Heart left ventricle (tissue), 16 donors: ENCODE measurements at regions of chr9 and their contacts with region 1.

Region 1: GRCh38 chr9:12719431-12719830 is 26.2 kb downstream of the TYRP1 start:
- DNase-seq: no peak
- ATAC-seq: peak in 3 of 4 donors; percentile 36 to 69 (median 38)
- H3K4me3 ChIP-seq: no peak overlapping the region
- H3K27ac ChIP-seq: no peak overlapping the region
- H3K4me1 ChIP-seq: peaks cover 0 to 5% (median 0%) of the 10 kb centered on the region in 12 donors
- H3K27me3 ChIP-seq: no peaks in the 10 kb centered on the region
- CTCF ChIP-seq: peak; percentile 28 to 67 (median 54)
- POLR2A ChIP-seq: no peak

Region 2: GRCh38 chr9:12652973-12653372 is 66.5 kb before region 1 on chr9:
- intact Hi-C with region 1: no loop called
- DNase-seq: no peak
- ATAC-seq: no peak
- H3K4me3 ChIP-seq: no peak overlapping the region
- H3K27ac ChIP-seq: no peak overlapping the region
- H3K4me1 ChIP-seq: no peaks in the 10 kb centered on the region
- H3K27me3 ChIP-seq: no peaks in the 10 kb centered on the region
- CTCF ChIP-seq: no peak
- POLR2A ChIP-seq: no peak

Region 3: GRCh38 chr9:12819436-12820185 is 100.2 kb after region 1 on chr9:
- intact Hi-C with region 1: loop called in 1 of 10 experiments (anchors 2 kb)
- DNase-seq: no peak
- ATAC-seq: no peak
- H3K4me3 ChIP-seq: no peak overlapping the region
- H3K27ac ChIP-seq: peak overlapping the region in 1 of 12 donors; percentile 25
- H3K4me1 ChIP-seq: peaks cover 0 to 21% (median 4%) of the 10 kb centered on the region in 12 donors
- H3K27me3 ChIP-seq: no peaks in the 10 kb centered on the region
- CTCF ChIP-seq: peak in 11 of 12 donors; percentile 7 to 50 (median 32)
- POLR2A ChIP-seq: no peak

Region 4: GRCh38 chr9:12884737-12885414 is 165.4 kb after region 1 on chr9:
- intact Hi-C with region 1: loop called (anchors 1 to 5 kb)
- DNase-seq: no peak
- ATAC-seq: peak in 3 of 4 donors; percentile 57 to 68 (median 58)
- H3K4me3 ChIP-seq: no peak overlapping the region
- H3K27ac ChIP-seq: no peak overlapping the region
- H3K4me1 ChIP-seq: peaks cover 0 to 17% (median 2%) of the 10 kb centered on the region in 12 donors
- H3K27me3 ChIP-seq: no peaks in the 10 kb centered on the region
- CTCF ChIP-seq: peak; percentile 17 to 74 (median 57)
- POLR2A ChIP-seq: no peak

Region 5: DNA sequence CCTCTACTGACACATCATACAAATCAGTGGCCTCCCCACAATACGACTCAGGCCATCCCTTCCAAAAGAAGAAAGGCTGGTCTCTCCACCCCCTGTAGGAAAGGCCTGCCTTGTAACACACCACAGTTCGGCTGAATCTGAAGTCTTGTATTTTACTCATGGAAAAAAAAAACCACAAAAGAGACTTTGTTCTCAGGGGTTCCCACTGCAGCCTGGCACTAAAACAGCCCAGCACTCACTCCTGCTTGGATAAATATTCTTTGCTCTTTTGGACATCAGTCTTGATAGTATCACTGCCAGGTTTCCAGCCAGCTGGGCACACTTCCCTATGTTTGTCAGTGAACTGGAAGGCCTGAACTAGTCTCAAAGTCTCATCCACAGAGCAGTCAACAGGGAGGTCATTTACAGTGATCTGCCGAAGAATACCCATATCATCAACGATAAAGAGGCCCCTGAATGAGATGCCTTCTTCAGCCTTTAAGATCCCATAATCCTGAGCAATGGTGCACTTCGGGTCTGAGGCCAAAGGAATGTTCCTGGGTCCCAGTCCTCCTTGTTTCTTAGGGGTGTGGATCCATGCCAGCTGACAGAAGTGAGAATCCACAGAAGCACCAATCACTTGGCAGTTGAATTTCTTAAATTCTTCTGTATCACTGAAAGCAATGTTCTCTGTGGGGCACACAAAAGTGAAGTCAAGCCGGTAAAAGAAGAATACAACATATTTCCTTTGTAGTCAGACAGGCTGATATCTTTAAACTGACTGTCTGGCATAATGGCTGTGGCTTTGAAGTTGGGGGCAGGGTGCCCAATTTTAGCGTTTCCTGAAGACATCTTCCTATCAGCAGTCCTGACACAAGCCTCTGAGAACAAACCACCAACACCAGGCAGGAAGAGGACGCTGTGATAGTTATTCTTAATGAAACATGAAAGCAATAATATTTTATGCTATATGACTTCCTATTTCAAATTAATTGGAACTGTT is 253.5 kb after region 1 on chr9:
- intact Hi-C with region 1: loop called in 1 of 10 experiments (anchors 10 kb)
- DNase-seq: peak in 2 of 5 donors; percentile 28 to 56
- ATAC-seq: peak; percentile 75 to 90 (median 84)
- H3K4me3 ChIP-seq: no peak overlapping the region
- H3K27ac ChIP-seq: peak overlapping the region in 8 of 12 donors; percentile 16 to 67 (median 28)
- H3K4me1 ChIP-seq: peaks cover 0 to 13% (median 7%) of the 10 kb centered on the region in 12 donors
- H3K27me3 ChIP-seq: no peaks in the 10 kb centered on the region
- CTCF ChIP-seq: peak in 1 of 12 donors; percentile 15
- POLR2A ChIP-seq: no peak

Region 6: DNA sequence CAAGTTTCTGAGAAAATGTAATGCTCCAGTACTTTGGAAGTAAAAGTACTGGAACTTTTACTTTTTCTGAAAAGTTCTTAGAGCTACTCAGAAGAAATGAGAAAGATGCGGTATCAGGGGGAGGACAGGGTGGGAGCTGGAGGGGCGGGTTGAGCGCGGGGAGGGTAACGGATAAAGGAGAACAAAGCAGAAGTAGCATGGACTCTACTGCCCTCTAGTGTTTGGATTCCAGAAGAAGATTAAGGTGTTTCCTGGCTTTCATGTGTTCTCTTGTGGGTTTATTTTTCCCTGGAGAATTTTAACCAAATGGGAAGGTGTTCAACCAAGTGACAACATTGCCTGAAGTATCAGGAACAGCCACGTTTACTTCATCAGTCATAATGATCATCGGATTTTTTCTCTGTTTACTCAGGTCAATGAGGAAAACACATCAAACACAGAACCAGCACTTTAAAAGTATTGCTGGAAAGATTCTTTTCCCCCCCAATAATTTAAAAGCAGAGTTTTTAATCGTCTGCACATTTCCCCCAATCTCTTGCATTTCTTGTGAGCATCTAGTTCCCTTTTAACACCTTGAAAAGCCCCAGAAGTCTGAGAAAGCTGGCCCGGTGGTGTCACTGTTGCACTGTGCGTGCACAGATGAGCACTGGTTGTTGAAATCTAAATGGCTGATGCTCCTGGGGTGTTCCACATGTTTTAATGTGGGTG is 369.4 kb after region 1 on chr9:
- intact Hi-C with region 1: loop called (anchors 2 to 5 kb)
- DNase-seq: no peak
- ATAC-seq: peak in 1 of 4 donors; percentile 61
- H3K4me3 ChIP-seq: no peak overlapping the region
- H3K27ac ChIP-seq: no peak overlapping the region
- H3K4me1 ChIP-seq: peaks cover 0 to 7% (median 0%) of the 10 kb centered on the region in 12 donors
- H3K27me3 ChIP-seq: no peaks in the 10 kb centered on the region
- CTCF ChIP-seq: peak; percentile 66 to 82 (median 74)
- POLR2A ChIP-seq: no peak